GM18951 (cell line): ENCODE measurements at regions of chr10 and their contacts with region 1.

Region 1: DNA sequence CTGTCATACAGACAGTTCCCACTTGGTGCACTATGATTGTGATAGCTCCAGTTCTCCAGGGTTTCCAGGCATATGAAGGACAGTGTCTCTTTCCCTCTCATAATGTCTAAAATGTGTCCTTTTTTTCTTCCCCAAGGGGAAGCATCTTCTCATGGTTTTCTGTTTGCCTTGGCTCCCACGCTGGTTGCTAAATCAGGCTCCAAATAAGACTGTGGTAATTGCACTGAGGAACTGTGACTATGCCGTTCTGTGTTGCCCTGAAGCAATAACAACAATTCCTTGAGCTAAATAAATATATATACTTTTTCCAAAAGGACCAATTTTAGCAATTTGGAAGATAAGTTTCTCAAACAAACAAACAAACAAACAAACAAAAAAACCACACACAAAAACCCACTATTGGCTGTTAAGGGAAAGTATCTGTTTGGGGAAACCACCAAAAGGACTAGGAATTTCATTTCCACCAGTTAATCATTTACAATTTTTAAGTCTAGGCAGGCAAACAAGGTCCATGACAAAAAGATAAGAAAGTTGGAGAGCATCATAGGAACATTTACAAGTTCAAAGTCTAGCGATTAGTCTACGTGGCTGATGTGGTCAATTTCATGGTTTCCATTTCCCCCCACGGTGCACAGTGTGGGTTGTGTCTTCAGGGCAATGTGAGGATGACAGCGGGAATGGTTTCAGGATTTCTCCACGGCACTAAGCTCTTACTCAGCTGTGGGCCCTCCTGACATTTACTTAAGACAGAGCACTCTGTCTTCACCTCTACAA is 62.4 kb downstream of the THNSL1 start:
- POLR2A ChIP-seq: no peak

Region 2: DNA sequence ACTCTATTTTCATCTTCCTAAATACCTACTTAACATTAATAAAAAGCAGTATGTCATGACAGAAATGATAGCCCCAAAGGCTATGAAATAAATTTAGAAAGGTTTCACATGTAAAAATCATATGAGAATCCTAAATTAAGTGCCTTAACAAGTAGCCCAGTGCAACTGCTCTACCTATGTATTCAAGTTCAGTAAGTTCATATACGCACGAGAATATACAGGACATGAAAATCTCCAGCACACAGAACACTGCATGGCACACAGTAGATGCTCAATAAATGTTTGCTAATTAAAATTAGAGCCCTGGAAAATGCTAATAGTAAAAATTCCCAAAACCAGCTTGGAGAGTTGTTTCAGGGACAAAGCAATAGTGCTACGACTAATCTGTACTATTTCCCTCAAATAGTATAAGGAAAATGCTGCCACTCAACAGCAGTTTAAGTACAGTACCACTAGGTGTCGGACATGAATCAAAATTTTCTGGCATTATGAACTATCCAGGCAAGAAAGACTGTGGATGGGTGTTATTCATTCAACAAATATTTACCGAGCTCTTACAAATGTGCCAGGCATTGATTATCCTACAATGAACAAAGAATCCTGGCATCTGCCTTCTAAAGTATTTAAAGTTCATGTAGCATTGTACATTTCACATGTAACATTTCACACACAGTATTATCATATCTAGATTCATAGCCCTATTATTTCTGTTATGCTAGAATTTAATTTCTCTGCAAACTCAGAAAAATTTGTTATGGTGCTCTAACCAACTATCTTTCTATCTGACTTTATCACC is 436.0 kb before region 1 on chr10:
- in situ Hi-C with region 1: loop called (anchors 10 kb)
- POLR2A ChIP-seq: no peak

Region 3: GRCh38 chr10:24690961-24691512 is 387.8 kb before region 1 on chr10:
- in situ Hi-C with region 1: no loop called
- POLR2A ChIP-seq: no peak